Colonic mucosa (tissue), 4 donors: ENCODE measurements at regions of chr20 and their contacts with region 1.

Region 1: GRCh38 chr20:45373353-45374100 is 4.6 kb downstream of the TP53TG5 start:
- DNase-seq: peak; percentile 97
- H3K4me3 ChIP-seq: peak overlapping the region; percentile 46
- H3K27ac ChIP-seq: peak overlapping the region; percentile 73
- H3K4me1 ChIP-seq: no peaks in the 10 kb centered on the region
- H3K27me3 ChIP-seq: no peaks in the 10 kb centered on the region
- CTCF ChIP-seq: peak; percentile 80

Region 2: GRCh38 chr20:45406259-45407066 is 32.9 kb after region 1 on chr20:
- intact Hi-C with region 1: loop called (anchors 5 kb)
- DNase-seq: peak; percentile 86
- H3K4me3 ChIP-seq: peak overlapping the region; percentile 66
- H3K27ac ChIP-seq: peak overlapping the region; percentile 89
- H3K4me1 ChIP-seq: peaks cover 15% of the 10 kb centered on the region
- H3K27me3 ChIP-seq: no peaks in the 10 kb centered on the region
- CTCF ChIP-seq: no peak

Region 3: GRCh38 chr20:45436732-45437391 is 63.3 kb after region 1 on chr20:
- intact Hi-C with region 1: loop called (anchors 5 kb)
- DNase-seq: peak; percentile 93
- H3K4me3 ChIP-seq: peak overlapping the region; percentile 48
- H3K27ac ChIP-seq: peak overlapping the region; percentile 41
- H3K4me1 ChIP-seq: no peaks in the 10 kb centered on the region
- H3K27me3 ChIP-seq: no peaks in the 10 kb centered on the region
- CTCF ChIP-seq: peak; percentile 89

Region 4: DNA sequence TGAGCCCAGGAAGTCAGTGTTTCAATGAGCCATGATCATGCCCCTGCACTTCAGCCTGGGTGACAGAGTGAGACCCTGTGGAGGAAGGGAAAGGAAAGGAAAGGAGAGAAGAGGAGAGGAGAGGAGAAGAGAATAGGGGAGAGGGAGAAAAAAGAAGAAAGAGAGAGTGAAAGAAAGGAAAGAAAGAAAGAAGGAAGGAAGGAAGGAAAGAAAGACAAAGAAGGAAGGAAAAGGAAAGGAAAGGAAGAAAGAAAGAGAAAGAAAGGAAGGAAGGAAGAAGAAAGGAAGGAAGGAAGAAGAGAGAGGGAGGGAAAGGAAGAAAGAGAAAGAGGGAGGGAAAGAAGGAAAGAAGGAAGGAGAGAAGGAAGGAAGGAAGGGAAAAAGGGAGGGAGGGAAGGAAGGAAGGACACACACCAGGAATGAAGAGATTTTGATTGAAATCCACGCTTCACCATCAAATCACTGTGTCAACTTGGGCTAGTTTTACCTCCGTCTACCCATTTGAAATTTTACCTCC is 191.3 kb after region 1 on chr20:
- intact Hi-C with region 1: no loop called
- DNase-seq: no peak
- H3K4me3 ChIP-seq: no peak overlapping the region
- H3K27ac ChIP-seq: no peak overlapping the region
- H3K4me1 ChIP-seq: no peaks in the 10 kb centered on the region
- H3K27me3 ChIP-seq: no peaks in the 10 kb centered on the region
- CTCF ChIP-seq: no peak